Activated naive CD8-positive, alpha-beta T cell treated with anti-CD3 and anti-CD28 coated beads, Interleukin-2, amount 10 ng/mL, durations not matched to agents 7 days and 5 days (primary cell): ENCODE measurements at regions of chr17 and their contacts with region 1.

Region 1: DNA sequence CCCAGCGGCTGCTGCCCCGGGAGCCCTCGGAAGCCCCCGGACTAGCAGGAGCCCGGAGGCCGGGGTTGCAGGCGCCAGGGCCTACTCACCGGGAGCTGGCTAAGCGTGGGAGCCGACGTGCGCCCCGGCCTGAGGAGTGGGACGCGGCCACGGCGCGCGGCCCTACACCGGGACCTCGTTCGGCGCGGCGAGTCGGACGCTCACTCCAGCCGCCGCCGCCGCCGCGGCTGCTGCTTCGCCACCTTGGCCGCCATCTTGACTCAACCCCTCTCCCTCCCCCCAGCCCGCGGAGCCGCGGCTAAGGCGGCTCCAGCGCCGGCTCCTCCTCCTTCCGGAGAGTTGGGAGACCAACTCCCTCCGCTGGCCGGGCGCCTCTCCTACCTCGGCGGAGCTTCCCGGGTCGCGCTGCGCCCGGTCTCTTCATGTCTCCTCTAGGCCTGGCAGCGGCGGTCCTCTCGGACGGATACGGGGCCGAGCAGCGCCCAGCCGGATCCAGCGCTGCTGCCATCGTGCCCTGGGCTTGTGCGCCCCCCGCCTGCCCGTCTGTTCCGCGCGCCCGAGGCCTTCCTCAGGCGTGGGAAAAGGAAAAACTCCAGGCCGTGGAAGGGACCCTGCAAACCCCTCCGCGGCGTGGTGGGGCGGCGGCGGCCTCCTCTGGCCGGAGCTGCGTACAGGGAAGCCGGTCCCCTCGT is at the start of gene NCOR1:
- DNase-seq: peak; percentile 90
- ATAC-seq: peak; percentile 83
- H3K4me3 Mint-ChIP-seq: peak within 1 kb of the TSS; percentile 98
- H3K27ac Mint-ChIP-seq: peak within 1 kb of the TSS; percentile 80
- H3K4me1 Mint-ChIP-seq: peaks cover 28% of the 10 kb centered on the region
- H3K27me3 Mint-ChIP-seq: no peaks in the 10 kb centered on the region
- total RNA-seq, gene NCOR1: 157 to 161 TPM

Region 2: DNA sequence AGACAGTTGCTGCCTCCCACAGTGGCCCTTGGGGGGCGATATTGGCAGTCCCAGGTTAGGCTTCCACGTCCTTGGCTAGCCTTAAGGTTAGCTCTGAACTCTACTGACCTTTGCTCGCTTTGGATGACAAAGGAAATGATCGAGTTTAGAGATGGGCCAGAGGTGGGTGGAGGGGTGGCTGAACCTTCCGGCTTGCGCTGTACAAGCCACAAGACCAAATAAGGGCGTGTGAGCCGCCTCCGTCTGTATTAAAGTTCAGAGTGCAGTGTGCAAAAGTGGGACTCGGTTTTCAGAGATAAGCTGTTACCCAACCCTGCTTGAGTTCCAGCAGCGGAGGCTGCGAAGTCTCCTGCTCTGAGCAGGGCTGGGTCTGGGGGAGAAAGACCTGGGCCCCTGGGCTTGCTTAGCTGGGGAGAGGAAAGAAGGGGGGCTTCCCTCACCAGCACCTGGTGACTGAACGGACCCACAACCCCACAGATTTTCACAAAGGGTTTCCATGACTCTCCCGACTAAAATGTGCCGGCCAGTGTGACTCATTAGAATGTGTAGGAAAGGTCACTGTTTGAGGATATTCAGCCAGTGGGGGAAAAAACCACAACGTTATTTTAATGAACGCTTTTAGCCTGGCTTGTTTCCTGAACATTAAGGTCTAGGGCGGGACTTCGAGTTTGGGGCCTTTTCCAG is 70.7 kb after region 1 on chr17:
- POLR2A ChIA-PET with region 1: interaction called, 41 read pairs
- DNase-seq: peak; percentile 73
- ATAC-seq: peak; percentile 97
- H3K4me3 Mint-ChIP-seq: peak overlapping the region; percentile 65
- H3K27ac Mint-ChIP-seq: peak overlapping the region; percentile 95
- H3K4me1 Mint-ChIP-seq: peaks cover 44% of the 10 kb centered on the region
- H3K27me3 Mint-ChIP-seq: no peaks in the 10 kb centered on the region